Gastrocnemius medialis (tissue), 4 donors: ENCODE measurements at regions of chr13 and their contacts with region 1.

Region 1: DNA sequence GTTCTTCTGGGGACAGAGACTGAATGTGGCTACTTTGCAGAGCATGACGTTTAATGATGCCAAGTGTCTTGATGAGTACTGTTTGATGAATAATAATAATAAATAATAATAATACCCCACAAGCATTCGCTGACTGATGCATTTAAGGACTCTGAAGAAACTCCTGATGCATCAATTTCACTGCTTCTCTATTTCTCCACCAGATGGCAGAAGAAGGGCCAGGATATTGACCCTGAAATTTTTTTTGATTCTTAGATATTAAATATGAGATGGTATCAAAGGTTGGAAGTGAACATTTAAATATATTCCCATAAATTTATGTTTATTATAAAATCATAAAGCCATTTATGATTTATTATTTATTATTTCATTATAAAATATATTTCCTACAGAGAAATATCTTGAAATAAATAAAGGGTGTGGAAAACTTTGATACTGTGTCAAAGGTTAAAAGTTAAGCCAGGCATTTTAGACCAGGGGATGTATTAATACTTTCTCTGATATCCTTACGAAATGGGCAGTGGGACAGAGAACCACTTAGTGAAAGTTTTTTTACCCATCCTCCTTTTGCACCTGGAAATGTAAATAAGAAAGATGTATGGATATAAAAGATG is 170.9 kb downstream of the LACC1 start:
- DNase-seq: no peak
- ATAC-seq: peak; percentile 58 to 70
- H3K4me3 ChIP-seq: no peak overlapping the region
- H3K27ac ChIP-seq: no peak overlapping the region
- H3K4me1 ChIP-seq: peaks cover 0 to 4% of the 10 kb centered on the region in 2 donors
- H3K27me3 ChIP-seq: no peaks in the 10 kb centered on the region
- CTCF ChIP-seq: peak; percentile 62 to 87 (median 73)
- POLR2A ChIP-seq: no peak

Region 2: GRCh38 chr13:44128552-44129001 is 78.0 kb after region 1 on chr13:
- in situ Hi-C with region 1: no loop called
- intact Hi-C with region 1: loop called (anchors 5 kb)
- DNase-seq: peak; percentile 72 to 89
- ATAC-seq: peak; percentile 99
- H3K4me3 ChIP-seq: no peak overlapping the region
- H3K27ac ChIP-seq: peak overlapping the region; percentile 84 to 86 (median 85)
- H3K4me1 ChIP-seq: peaks cover 22% of the 10 kb centered on the region in 2 donors
- H3K27me3 ChIP-seq: no peaks in the 10 kb centered on the region
- CTCF ChIP-seq: peak; percentile 36 to 53 (median 41)
- POLR2A ChIP-seq: no peak

Region 3: DNA sequence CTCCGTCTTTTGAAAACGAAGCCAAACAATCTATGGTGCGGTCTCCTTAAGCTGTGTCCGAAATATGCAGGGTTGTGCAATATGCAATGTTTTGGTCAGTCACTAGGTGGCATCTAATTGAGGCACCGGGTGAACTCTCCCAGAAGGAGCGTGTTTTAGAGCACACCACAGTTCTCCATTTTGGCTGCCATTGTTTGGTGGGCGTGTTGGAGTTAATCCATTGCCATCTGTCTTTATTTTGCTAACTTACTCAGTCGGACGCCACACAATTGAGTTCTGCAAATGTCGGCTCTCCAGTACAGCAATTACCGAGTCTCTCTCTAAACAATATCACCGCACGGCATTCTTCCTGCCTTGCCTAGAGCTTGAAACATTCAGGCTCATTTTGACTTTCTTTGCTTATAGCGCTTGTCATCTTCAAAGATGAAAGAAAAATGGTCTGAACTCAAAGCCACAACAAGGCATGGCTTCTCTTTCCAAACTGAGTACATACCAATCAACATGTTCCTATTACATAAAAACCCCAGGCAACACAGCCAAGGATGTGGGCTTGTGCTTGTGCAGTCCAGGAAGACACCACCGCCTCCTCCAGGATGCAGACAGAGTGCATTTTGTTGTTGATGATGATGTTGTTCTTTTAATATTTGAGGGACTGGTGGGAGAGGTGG is 141.1 kb after region 1 on chr13:
- in situ Hi-C with region 1: no loop called
- intact Hi-C with region 1: loop called (anchors 5 kb)
- DNase-seq: peak; percentile 57 to 68
- ATAC-seq: peak; percentile 98 to 99
- H3K4me3 ChIP-seq: peak overlapping the region; percentile 26 to 44 (median 32)
- H3K27ac ChIP-seq: peak overlapping the region; percentile 52 to 71 (median 56)
- H3K4me1 ChIP-seq: peaks cover 5 to 11% of the 10 kb centered on the region in 2 donors
- H3K27me3 ChIP-seq: no peaks in the 10 kb centered on the region
- CTCF ChIP-seq: peak; percentile 80 to 98 (median 89)
- POLR2A ChIP-seq: no peak